ENCODE measurements at regions of chr22 and their contacts with region 1.

Region 1: DNA sequence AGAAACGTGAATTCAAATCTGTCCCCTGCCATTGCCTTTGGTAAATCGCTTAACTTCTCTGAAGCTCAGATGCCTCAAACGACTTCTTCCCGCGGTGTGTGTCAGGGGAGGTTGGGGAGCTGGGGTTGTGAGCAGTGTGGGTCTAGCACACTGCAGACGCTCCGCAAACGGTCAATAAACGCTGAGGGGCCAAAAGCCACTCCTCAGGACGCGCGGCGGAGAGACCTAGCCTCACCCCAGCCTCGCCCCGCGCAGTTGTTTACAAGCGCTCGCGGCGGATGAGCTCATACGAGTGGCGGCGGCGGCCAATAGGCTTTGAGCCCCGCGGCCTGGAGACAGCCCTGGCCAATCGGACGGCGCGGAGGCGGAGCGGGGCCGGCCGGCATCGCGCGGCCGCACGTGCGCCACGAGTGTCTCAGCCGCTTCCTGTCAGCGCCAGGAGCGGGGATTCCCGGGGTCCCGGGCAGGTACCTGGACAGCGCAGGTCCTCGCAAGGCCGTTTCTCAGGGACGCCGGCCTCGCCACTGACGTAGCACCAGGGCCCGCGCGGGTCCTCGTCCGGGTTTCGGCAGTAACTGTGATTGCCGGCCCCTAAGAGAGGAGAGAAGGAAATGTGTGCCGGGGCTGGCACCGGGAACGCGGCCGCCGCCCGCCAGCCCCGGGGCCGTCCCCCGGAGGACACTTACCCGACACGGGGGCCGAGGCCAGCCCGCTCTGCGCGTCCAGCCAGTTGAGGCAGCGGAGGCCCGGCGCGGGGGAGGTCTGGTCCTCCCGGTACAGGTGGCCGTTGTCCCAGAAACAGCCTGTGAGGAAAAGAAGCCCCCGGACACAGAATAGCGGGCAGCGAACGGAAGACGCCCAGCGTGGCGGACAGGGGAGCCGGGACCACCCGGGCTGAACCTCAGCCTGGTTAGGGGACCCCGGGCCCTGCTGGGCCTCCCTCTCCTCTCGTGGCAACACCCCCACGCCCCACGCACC is 1.5 kb downstream of the PIK3IP1 start:
- DNase-seq: peak; percentile 93
- H3K4me3 Mint-ChIP-seq: peak overlapping the region; percentile 96
- H3K27ac Mint-ChIP-seq: peak overlapping the region; percentile 99
- H3K4me1 Mint-ChIP-seq: peaks cover 77% of the 10 kb centered on the region
- H3K27me3 Mint-ChIP-seq: no peaks in the 10 kb centered on the region

Region 2: GRCh38 chr22:30742291-30743256 is 548.2 kb before region 1 on chr22:
- intact Hi-C with region 1: loop called (anchors 5 kb)
- DNase-seq: no peak
- H3K4me3 Mint-ChIP-seq: peak overlapping the region; percentile 48
- H3K27ac Mint-ChIP-seq: peak overlapping the region; percentile 96
- H3K4me1 Mint-ChIP-seq: peaks cover 81% of the 10 kb centered on the region
- H3K27me3 Mint-ChIP-seq: no peaks in the 10 kb centered on the region

Region 3: DNA sequence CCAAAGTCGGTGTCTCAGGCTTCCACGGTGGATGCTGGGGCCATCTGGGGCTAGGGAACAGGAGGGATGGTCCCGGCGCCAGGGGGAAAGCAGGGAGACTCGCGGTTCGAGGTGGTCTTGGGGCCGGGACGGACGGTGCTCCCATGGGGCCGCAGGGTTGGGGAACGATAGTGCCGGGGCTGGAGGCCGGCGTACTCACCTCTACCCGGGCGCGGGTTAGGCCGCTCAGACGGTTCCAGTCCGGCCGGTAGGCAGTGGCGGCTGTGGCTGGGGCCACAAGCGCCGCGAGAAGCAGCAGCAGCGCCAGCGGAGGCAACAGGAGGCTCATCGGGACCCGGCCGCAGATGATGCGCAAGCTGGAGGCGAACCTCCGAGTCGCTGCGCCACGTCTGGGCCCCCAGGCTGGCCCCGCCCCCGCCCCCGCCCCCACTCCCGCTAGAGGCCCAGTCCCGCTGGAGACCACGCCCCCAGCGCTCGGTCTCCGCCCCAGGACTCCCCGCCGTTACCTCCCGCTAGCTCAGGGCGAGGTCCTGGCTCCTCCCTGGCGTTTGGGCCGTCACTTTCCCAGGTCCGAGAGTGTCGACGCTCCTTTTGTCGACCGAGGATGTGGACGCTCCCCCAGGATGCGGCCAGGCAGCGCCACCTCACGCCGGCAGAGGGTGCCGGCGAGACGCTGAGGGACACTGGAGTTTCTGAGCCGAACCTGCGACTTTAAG is 183.4 kb before region 1 on chr22 and contains the start of gene SELENOM:
- intact Hi-C with region 1: loop called (anchors 1 kb)
- DNase-seq: peak; percentile 86
- H3K4me3 Mint-ChIP-seq: peak within 1 kb of the TSS; percentile 83
- H3K27ac Mint-ChIP-seq: peak within 1 kb of the TSS; percentile 33
- H3K4me1 Mint-ChIP-seq: peaks cover 19% of the 10 kb centered on the region
- H3K27me3 Mint-ChIP-seq: peaks cover 6% of the 10 kb centered on the region
- total RNA-seq, gene SELENOM: 6.4 and 9.8 TPM in 2 replicates

Region 4: DNA sequence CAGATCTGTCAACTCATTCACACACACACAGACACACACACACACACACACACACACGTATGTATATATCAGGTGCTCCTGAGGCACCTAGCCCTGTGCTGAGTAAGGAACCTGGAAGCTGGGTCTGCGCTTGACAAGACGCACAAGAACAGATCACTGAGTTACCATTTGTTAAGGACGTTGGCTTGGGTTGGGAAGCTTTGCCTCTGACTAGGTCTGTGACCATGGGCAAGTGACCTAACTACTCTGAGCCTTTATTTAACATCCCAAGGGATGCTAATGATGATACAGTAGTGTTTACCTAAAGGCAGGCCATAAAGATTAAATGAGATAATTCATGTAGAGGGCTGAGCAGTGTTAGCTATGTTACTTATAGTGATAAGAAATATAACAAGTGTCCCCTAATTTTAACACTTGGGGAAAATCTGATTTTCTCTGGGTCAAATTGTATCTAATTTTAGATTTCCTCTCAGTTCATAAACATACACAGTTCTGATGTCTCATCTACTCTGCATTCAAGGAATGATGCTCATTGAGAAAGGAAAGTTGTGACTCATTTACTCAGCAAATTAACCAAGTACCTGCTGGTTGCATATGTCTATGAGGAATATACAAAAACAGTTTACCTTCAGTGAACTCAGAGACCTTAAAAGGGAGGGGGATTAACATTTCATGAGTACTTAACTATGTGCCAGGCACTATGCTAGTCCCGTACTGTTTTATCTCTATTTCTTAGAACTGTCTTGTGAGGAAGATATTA is 117.2 kb before region 1 on chr22:
- intact Hi-C with region 1: no loop called
- DNase-seq: no peak
- H3K4me3 Mint-ChIP-seq: no peak overlapping the region
- H3K27ac Mint-ChIP-seq: peak overlapping the region; percentile 64
- H3K4me1 Mint-ChIP-seq: peaks cover 14% of the 10 kb centered on the region
- H3K27me3 Mint-ChIP-seq: no peaks in the 10 kb centered on the region

Region 5: GRCh38 chr22:31248138-31248745 is 42.5 kb before region 1 on chr22:
- intact Hi-C with region 1: loop called (anchors 1 kb)
- DNase-seq: peak; percentile 66
- H3K4me3 Mint-ChIP-seq: peak overlapping the region; percentile 44
- H3K27ac Mint-ChIP-seq: peak overlapping the region; percentile 73
- H3K4me1 Mint-ChIP-seq: peaks cover 28% of the 10 kb centered on the region
- H3K27me3 Mint-ChIP-seq: no peaks in the 10 kb centered on the region

Region 6: DNA sequence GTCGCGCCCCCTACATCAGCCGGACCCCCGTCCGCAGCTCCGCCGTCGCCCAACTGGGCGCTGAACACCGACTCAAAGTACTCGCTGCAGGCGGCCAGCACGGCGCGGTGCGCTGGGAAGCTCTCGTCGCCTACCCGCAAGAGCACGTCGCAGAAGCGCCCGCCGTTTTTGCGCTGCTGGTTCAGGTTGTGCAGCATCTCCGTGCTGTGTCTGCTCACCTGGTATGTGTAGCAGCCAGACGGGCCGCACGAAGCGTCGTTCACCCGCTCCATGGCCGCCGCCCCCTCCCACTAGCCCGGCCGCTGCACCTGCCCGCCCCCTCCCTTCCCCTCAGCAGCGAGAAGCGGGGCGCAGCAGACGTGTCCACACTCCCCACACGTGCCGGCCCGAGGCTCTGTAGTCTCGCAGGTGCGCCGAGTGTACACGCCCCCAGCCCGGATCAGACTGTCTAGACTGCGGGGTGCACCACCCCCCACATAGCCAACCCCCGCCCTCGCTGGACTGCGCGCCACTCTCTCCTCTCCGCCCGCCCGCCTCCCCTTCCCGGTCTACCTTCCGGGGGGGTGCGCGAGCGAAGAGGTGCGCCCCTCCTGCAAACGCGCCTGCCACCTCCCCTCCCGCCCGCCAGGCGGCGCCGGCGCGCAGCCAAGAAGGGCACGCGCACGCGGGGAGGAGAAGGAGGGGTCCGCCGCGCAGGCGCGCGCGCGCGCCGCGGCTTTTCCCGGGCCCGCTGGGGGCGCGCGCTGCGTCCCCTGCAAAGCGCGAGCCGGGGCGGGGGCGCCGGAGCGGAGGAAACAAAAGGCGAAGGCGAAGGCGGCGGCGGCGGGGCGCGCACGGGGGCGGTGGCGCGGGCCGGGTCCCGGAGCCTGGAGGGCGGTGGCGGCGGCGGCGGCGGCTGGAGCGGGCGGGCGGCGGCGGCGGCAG is 54.8 kb after region 1 on chr22:
- intact Hi-C with region 1: loop called (anchors 1 kb)
- DNase-seq: peak; percentile 85
- H3K4me3 Mint-ChIP-seq: peak overlapping the region; percentile 87
- H3K27ac Mint-ChIP-seq: peak overlapping the region; percentile 89
- H3K4me1 Mint-ChIP-seq: peaks cover 48% of the 10 kb centered on the region
- H3K27me3 Mint-ChIP-seq: no peaks in the 10 kb centered on the region

Region 7: GRCh38 chr22:31630331-31631329 is 339.8 kb after region 1 on chr22:
- intact Hi-C with region 1: loop called (anchors 5 kb)
- DNase-seq: peak; percentile 82
- H3K4me3 Mint-ChIP-seq: peak overlapping the region; percentile 87
- H3K27ac Mint-ChIP-seq: peak overlapping the region; percentile 88
- H3K4me1 Mint-ChIP-seq: peaks cover 54% of the 10 kb centered on the region
- H3K27me3 Mint-ChIP-seq: no peaks in the 10 kb centered on the region

Region 8: DNA sequence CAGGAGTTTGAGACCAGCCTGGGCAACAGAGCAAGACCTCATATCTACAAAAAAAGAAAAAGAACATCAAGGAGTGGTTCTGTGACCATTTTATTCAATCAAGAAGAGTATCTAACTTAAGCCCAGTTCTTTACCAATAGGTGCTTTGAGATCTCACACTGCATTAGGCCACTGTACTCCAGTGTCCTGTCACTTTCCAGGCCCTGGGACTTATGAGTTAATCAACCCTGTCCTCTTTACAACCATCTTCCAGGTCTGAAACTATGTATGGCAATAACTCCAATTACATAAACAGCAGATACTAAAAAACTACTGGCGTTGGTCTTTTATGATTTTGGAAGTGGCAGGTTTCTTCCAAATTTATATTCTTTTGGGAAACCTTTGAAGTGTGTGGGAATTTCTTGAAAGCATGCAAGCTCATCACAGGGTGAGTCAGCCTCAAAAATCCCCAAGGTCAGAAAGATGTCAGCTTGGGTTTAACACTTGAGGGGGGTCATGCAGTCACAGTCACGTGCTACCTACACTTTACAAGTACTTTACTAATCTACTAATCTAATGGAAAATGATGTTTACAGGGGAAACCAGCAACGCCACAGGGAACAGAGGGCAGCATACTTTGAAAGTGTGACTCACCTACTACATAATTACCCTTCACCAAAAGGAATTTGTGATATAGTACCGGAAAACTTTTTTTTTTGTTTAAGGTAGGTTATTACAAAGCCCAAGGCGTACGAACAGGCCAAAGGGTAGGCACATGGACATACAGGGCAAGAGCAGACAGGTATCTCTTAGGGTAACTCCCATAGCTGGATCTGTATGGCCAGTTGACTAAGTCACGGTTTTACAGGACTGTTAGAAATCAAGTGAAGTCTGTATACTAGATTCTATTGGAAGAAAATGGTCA is 355.7 kb after region 1 on chr22:
- intact Hi-C with region 1: no loop called
- DNase-seq: no peak
- H3K4me3 Mint-ChIP-seq: no peak overlapping the region
- H3K27ac Mint-ChIP-seq: peak overlapping the region; percentile 82
- H3K4me1 Mint-ChIP-seq: peaks cover 21% of the 10 kb centered on the region
- H3K27me3 Mint-ChIP-seq: no peaks in the 10 kb centered on the region